ENCODE measurements at regions of chr7 and their contacts with region 1.

Region 1: DNA sequence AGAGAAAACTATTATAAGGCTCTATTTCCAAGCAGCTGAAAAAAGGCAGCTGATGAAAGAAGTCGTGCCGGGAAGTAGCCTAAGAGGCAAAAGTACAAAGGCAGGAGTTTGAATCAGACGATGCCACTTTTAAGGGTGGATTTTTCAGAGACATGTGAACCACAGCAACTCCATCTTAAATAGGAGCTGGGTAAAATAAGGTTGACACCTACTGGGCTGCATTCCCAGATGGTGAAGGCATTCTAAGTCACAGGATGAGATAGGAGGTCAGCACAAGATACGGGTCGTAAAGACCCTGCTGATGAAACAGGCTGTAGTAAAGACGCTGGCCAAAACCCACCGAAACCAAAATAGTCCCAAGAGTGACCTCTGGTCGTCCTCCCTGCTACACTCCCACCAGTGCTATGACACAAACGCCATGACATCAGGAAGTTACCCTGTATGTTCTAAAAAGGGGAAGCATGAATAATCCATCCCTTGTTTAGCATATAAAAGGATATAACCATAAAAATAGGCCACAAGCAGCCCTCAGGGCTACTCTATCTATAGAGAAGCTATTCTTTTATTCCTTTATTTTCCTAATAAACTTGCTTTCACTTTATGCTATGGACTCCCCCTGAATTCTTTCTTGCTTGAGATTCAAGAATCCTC is 45.5 kb upstream of the PRSS1 start:
- DNase-seq: no peak
- H3K4me3 ChIP-seq: no peak overlapping the region
- H3K27ac ChIP-seq: no peak overlapping the region
- H3K4me1 ChIP-seq: no peaks in the 10 kb centered on the region
- H3K27me3 ChIP-seq: no peaks in the 10 kb centered on the region
- CTCF ChIP-seq: no peak

Region 2: GRCh38 chr7:142685877-142686508 is 17.8 kb before region 1 on chr7:
- CTCF ChIA-PET with region 1: no interaction called
- POLR2A ChIA-PET with region 1: no interaction called
- intact Hi-C with region 1: loop called (anchors 1 kb)
- DNase-seq: no peak
- H3K4me3 ChIP-seq: no peak overlapping the region
- H3K27ac ChIP-seq: no peak overlapping the region
- H3K4me1 ChIP-seq: no peaks in the 10 kb centered on the region
- H3K27me3 ChIP-seq: no peaks in the 10 kb centered on the region
- CTCF ChIP-seq: no peak